ENCODE measurements at regions of chr6 and their contacts with region 1.

Region 1: GRCh38 chr6:54183616-54184015 is 72.4 kb downstream of the MLIP start:
- DNase-seq: no peak
- H3K4me3 ChIP-seq: no peak overlapping the region
- H3K27ac ChIP-seq: no peak overlapping the region
- H3K4me1 ChIP-seq: no peaks in the 10 kb centered on the region
- H3K27me3 ChIP-seq: no peaks in the 10 kb centered on the region
- CTCF ChIP-seq: no peak
- POLR2A ChIP-seq: no peak

Region 2: GRCh38 chr6:54060286-54060685 is 123.3 kb before region 1 on chr6:
- intact Hi-C with region 1: no loop called
- DNase-seq: no peak
- H3K4me3 ChIP-seq: no peak overlapping the region
- H3K27ac ChIP-seq: no peak overlapping the region
- H3K4me1 ChIP-seq: no peaks in the 10 kb centered on the region
- H3K27me3 ChIP-seq: no peaks in the 10 kb centered on the region
- CTCF ChIP-seq: no peak
- POLR2A ChIP-seq: no peak

Region 3: DNA sequence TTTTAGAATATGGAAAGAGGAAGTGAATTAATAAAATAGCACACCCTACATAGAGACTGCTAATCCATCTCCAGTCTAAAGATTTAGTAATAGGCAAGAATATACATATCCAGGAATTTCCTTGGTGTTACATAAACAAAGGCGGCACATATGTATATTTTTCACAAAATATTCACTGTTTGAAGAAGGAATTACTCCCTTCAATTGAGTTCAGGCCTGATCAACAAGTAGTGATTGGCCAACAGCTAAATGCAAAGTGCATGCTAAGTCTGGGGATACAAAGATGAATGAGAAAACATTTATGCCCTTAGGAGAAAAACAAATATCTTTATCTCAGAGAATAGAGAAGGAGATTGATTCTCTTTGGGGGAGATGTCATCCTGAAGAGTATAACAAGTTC is 984.2 kb after region 1 on chr6:
- intact Hi-C with region 1: loop called (anchors 5 kb)
- DNase-seq: no peak
- H3K4me3 ChIP-seq: no peak overlapping the region
- H3K27ac ChIP-seq: no peak overlapping the region
- H3K4me1 ChIP-seq: no peaks in the 10 kb centered on the region
- H3K27me3 ChIP-seq: no peaks in the 10 kb centered on the region
- CTCF ChIP-seq: no peak
- POLR2A ChIP-seq: no peak

Measured in vagina (tissue), 2 donors.